T-cell (primary cell): ENCODE measurements at regions of chr4 and their contacts with region 1.

Region 1: GRCh38 chr4:40438384-40439026 is 103.4 kb downstream of the CHRNA9 start:
- DNase-seq: no peak
- ATAC-seq: no peak
- H3K4me3 ChIP-seq: no peak overlapping the region
- H3K4me3 Mint-ChIP-seq: peak overlapping the region in 1 of 3 donors; percentile 56
- H3K27ac ChIP-seq: no peak overlapping the region
- H3K27ac Mint-ChIP-seq: peak overlapping the region; percentile 48 to 59
- H3K4me1 ChIP-seq: peaks cover 3 to 25% of the 10 kb centered on the region in 2 experiments
- H3K4me1 Mint-ChIP-seq: peaks cover 23 to 46% (median 44%) of the 10 kb centered on the region in 3 donors
- H3K27me3 ChIP-seq: no peaks in the 10 kb centered on the region
- H3K27me3 Mint-ChIP-seq: no peaks in the 10 kb centered on the region

Region 2: DNA sequence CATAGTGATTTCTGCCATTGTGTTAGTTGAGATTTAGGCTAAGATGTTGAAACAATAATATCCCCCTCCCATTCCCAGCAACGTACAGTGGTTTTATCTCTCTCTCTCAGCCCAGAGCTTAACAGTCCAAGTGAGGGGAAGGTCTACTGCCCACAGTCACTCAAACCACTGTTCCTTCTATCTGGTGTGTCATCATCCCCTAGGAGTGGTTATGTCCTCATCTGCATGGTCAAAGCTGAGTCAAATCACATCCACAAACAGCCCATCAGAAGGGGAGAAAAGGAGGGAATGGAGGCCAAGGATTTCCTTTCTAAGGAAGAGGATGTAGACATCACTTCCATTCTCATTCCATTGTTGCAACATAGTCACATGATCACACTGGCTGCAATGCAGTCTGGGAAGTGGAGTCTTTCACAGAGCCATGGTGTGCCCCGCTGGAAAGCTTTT is 146.2 kb before region 1 on chr4:
- CTCF ChIA-PET with region 1: no interaction called
- POLR2A ChIA-PET with region 1: no interaction called
- DNase-seq: no peak
- ATAC-seq: no peak
- H3K4me3 ChIP-seq: no peak overlapping the region
- H3K4me3 Mint-ChIP-seq: no peak overlapping the region
- H3K27ac ChIP-seq: no peak overlapping the region
- H3K27ac Mint-ChIP-seq: peak overlapping the region; percentile 47 to 68
- H3K4me1 ChIP-seq: peaks cover 27 to 34% of the 10 kb centered on the region in 2 experiments
- H3K4me1 Mint-ChIP-seq: peaks cover 3 to 66% (median 55%) of the 10 kb centered on the region in 3 donors
- H3K27me3 ChIP-seq: no peaks in the 10 kb centered on the region
- H3K27me3 Mint-ChIP-seq: no peaks in the 10 kb centered on the region

Region 3: GRCh38 chr4:40662962-40663604 is 224.6 kb after region 1 on chr4:
- CTCF ChIA-PET with region 1: interaction called in 1 of 2 experiments, 11 read pairs
- POLR2A ChIA-PET with region 1: no interaction called
- DNase-seq: no peak
- ATAC-seq: no peak
- H3K4me3 ChIP-seq: no peak overlapping the region
- H3K4me3 Mint-ChIP-seq: no peak overlapping the region
- H3K27ac ChIP-seq: no peak overlapping the region
- H3K27ac Mint-ChIP-seq: no peak overlapping the region
- H3K4me1 ChIP-seq: no peaks in the 10 kb centered on the region
- H3K4me1 Mint-ChIP-seq: peaks cover 0 to 2% (median under 1%) of the 10 kb centered on the region in 3 donors
- H3K27me3 ChIP-seq: no peaks in the 10 kb centered on the region
- H3K27me3 Mint-ChIP-seq: no peaks in the 10 kb centered on the region